ENCODE measurements at regions of chr18 and their contacts with region 1.

Region 1: GRCh38 chr18:36284671-36285295 is 12.7 kb upstream of the FHOD3 start:
- DNase-seq: peak; percentile 55
- H3K4me3 Mint-ChIP-seq: no peak overlapping the region
- H3K27ac Mint-ChIP-seq: no peak overlapping the region
- H3K4me1 Mint-ChIP-seq: no peaks in the 10 kb centered on the region
- H3K27me3 Mint-ChIP-seq: peaks cover 14% of the 10 kb centered on the region

Region 2: DNA sequence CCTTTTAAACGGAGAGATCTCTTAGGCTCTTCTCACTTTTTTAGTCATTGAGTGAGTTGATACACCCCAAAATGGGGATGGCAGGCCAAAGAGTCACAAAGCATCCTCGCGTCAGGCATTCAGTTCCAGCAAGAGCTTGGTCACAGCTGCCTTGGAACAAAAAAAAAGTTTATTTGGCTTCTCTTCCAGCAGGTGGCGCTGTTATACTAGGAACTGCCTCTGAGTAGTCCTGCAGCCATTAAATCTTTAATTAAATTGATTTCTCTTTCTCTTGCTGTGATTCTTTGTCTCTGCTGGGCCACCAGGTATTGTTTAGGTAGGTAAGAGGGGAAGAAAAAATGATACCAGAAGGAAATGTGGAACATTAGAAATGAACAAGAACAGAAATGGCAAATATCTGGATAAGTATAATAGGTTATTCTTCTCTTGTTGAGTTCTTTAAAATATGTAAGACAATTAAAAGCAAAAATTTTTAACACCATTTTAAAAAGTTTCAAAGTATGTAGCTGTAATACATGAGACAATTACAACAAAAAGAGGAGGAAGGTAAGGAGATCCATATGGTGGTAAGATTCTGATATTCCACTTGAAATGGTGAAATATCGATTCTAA is 528.2 kb before region 1 on chr18:
- CTCF ChIA-PET with region 1: interaction called, 10 read pairs
- intact Hi-C with region 1: loop called (anchors 1 kb)
- DNase-seq: peak; percentile 78
- H3K4me3 Mint-ChIP-seq: no peak overlapping the region
- H3K27ac Mint-ChIP-seq: no peak overlapping the region
- H3K4me1 Mint-ChIP-seq: no peaks in the 10 kb centered on the region
- H3K27me3 Mint-ChIP-seq: peaks cover 18% of the 10 kb centered on the region

Region 3: GRCh38 chr18:36120300-36120778 is 164.4 kb before region 1 on chr18:
- CTCF ChIA-PET with region 1: no interaction called
- intact Hi-C with region 1: no loop called
- DNase-seq: no peak
- H3K4me3 Mint-ChIP-seq: no peak overlapping the region
- H3K27ac Mint-ChIP-seq: no peak overlapping the region
- H3K4me1 Mint-ChIP-seq: peaks cover 9% of the 10 kb centered on the region
- H3K27me3 Mint-ChIP-seq: no peaks in the 10 kb centered on the region

Region 4: DNA sequence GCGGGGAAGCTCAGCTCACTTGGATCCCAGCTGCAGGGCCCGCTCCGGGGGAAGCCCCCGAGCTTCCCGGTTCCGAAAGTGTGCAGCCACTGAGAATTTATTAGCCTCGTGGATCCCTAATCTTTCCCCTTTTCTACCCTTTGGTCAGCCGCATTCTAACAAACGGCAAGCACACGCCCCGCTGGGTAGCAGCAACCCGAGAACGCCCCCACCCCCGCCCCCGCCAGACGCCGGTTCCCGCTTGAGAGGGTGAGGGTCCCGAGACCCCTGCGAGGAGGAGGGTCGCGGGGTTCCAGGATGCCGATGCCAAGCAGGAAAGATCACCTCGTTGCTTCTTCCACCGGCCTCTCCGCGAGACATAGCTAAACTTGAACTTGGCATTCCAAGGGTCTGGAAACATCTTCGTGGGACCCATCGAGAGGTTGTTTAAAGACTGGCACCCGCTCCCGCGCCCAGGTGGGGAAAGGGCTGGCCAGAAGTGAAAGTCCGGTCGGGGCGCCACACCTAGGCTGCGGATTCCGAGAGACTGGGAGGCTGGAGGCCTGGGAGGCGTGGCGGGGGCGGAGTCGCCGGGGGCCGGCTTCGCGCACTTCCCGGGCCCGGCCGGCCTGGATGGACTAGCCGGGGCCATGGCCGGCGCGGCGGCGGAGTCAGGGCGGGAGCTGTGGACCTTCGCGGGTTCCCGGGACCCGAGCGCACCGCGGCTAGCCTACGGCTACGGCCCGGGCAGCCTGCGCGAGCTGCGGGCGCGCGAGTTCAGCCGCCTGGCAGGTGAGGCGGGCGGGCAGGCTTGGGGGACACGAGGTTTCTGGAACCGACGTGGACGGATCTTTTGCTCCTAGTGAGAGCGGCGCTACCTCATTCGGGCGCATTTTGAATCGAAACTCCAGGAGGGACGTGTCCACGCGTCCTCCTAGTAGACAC is 97.6 kb before region 1 on chr18 and contains the start of gene MOCOS:
- CTCF ChIA-PET with region 1: interaction called, 3 read pairs
- intact Hi-C with region 1: loop called (anchors 5 kb)
- DNase-seq: peak; percentile 36
- H3K4me3 Mint-ChIP-seq: peak within 1 kb of the TSS; percentile 73
- H3K27ac Mint-ChIP-seq: no peak within 1 kb of the TSS
- H3K4me1 Mint-ChIP-seq: peaks cover 3% of the 10 kb centered on the region
- H3K27me3 Mint-ChIP-seq: peaks cover 20% of the 10 kb centered on the region
- total RNA-seq, gene MOCOS: not detected

Measured in activated naive CD4-positive, alpha-beta T cell treated with anti-CD3 and anti-CD28 coated beads for 36 hours (primary cell).